WTC11 (cell line): ENCODE measurements at regions of chr11 and their contacts with region 1.

Region 1: GRCh38 chr11:73360336-73361013 is 15.7 kb upstream of the RELT start:
- DNase-seq: peak; percentile 81
- ATAC-seq: peak; percentile 23
- H3K4me3 Mint-ChIP-seq: no peak overlapping the region; the same call in 1 of the 2 replicates
- H3K27ac Mint-ChIP-seq: no peak overlapping the region; the same call in 1 of the 2 replicates
- H3K4me1 Mint-ChIP-seq: peaks cover 8% of the 10 kb centered on the region
- H3K27me3 Mint-ChIP-seq: peaks cover 7% of the 10 kb centered on the region
- CTCF ChIP-seq: no peak

Region 2: DNA sequence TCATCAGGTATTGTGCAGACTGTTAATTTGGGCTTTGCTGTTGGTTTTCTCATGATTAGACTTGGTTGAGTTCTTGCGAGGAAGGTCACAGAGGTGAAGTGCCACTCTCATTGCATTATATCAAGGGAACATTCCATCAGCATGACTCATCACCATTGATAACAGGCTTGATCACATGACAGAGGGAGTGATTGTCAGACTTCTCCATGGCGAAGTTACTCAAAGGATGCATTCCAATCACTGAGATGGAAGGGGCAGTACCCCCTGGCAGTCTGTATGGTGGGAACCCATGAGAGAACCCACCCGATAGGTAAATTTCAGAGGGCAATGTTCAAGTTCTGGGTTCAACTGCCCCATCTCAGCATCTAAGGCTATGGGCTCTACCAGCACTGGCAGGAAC is 161.8 kb before region 1 on chr11:
- CTCF ChIA-PET with region 1: no interaction called
- POLR2A ChIA-PET with region 1: no interaction called
- DNase-seq: peak; percentile 4
- ATAC-seq: no peak
- H3K4me3 Mint-ChIP-seq: no peak overlapping the region
- H3K27ac Mint-ChIP-seq: no peak overlapping the region
- H3K4me1 Mint-ChIP-seq: peaks cover 27% of the 10 kb centered on the region
- H3K27me3 Mint-ChIP-seq: no peaks in the 10 kb centered on the region; the same call in 1 of the 2 replicates
- CTCF ChIP-seq: no peak

Region 3: DNA sequence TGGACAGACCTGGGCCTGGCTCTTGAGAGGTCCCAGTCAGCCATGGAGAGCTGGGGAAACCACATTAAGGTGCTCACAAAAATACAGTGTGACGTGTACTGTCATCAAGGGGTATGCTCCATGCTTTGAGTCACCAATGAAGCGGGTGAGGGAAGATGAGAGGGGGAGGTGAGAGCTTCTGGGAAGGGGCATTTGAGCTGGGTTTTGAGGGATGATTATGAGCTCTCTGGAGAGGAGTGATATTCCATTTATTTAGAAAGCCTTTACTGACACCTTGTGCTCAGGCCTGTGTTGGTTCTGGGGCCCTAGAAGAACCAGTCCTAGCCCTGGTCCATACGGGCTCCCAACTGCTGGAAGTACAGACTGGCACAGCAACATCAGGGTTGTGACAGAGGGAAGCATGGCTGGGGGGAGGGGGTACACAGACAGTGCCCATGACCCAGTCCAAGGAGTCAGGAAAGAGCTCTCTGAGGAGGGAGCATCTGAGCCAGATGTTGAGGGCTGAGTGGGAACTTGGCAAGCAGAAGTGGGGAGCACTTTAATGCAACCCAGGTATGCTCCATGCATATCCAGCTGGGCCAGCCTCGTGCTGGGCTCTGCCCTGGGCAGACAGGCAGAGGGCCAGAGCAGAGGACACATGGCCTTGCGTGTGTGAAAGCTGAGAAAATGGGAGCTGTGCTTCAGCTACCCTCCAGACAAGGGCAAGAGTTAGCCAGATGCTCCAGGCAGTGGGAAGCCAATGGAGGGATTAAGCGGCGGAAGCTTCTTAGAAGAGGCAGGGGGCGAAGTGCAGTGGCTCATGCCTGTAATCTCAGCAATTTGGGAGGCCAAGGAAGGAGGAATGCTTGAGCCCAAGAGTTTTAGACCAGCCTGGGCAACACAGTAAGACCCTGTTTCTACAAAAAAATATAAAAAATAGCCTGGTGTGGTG is 62.5 kb before region 1 on chr11:
- CTCF ChIA-PET with region 1: interaction called, 21 read pairs
- POLR2A ChIA-PET with region 1: no interaction called
- DNase-seq: no peak
- ATAC-seq: no peak
- H3K4me3 Mint-ChIP-seq: no peak overlapping the region
- H3K27ac Mint-ChIP-seq: no peak overlapping the region
- H3K4me1 Mint-ChIP-seq: peaks cover 12% of the 10 kb centered on the region
- H3K27me3 Mint-ChIP-seq: peaks cover 6% of the 10 kb centered on the region
- CTCF ChIP-seq: no peak

Region 4: DNA sequence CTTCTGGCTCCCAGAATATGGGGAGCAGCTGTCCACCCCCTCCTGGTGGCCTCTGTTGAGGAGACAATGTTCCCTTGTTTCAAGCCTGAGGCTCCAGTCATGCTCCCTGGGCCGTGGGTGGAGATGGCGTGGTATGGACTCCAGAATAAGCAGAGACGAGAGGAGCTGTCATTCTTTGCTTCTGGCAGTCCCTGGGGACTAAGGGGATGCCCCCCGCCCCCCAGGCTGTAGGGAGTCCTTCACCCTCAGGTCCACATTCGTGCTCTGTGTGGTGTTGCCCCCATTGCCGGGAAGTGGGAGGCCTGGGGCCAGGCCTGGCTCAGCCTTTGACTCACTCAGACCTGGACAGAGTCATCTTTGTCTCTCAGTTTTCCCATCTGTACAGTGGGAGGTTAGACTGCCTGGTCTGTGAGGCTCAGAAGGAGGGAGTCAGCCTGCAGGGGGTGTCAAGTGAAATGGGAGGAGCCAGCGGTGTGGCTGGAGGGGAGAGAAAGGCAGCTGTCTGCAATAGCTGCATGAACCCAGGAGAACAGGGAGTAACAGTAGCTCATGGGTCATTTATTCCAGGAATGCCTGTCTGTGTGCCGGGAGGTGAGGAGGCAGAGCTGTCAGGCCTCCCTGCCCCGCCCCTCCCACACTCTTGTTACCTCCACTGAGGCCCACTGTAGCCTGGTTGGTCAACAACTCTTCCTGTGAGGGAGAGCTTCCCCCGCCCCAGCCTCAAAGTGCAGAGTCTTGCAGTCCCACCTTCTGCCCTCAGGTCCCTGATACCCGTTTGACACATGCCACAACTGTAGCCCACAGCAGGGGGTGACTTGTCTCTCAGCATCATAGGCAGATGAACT is 46.1 kb before region 1 on chr11:
- CTCF ChIA-PET with region 1: interaction called, 124 read pairs
- POLR2A ChIA-PET with region 1: interaction called, 4 read pairs
- DNase-seq: peak; percentile 28
- ATAC-seq: peak; percentile 46
- H3K4me3 Mint-ChIP-seq: no peak overlapping the region
- H3K27ac Mint-ChIP-seq: no peak overlapping the region
- H3K4me1 Mint-ChIP-seq: peaks cover 27% of the 10 kb centered on the region
- H3K27me3 Mint-ChIP-seq: peaks cover 20% of the 10 kb centered on the region
- CTCF ChIP-seq: no peak

Region 5: DNA sequence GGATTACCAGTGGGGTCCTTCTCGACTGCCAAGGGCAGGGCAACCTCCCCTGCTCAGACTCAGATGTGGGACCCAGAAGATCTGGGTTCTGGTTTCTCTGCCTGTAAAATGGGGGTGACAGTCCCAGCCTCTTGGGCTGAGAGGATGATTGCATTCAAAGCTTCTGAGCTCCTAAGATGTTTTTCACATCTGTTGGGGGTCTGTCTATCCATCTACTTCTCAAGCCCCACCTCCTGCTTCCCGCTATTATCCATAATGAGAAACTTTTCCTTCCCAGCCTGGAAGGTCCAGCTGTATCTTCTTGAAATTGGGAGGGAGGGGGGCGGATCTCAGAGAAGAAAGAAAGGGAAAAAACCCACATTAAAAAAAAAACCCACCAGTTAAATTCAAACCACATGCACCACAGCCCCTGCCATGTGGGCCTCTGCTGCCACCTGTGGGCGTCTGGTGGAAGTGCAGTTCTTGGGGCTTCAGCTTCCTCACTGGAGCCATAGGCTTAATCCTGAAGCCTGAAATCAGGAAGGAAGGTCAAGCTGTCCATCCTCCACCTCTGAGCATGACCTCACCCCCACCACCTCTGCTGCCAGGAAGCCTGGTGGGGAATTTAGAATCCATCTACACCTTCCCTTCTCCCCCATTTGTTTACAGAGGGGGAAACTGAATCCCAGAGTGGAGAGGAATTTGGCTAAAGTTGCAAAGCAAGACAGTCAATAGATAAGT is 25.1 kb before region 1 on chr11:
- CTCF ChIA-PET with region 1: interaction called, 64 read pairs
- POLR2A ChIA-PET with region 1: interaction called, 5 read pairs
- DNase-seq: peak; percentile 94
- ATAC-seq: peak; percentile 38
- H3K4me3 Mint-ChIP-seq: no peak overlapping the region
- H3K27ac Mint-ChIP-seq: no peak overlapping the region
- H3K4me1 Mint-ChIP-seq: peaks cover 50% of the 10 kb centered on the region
- H3K27me3 Mint-ChIP-seq: peaks cover 64% of the 10 kb centered on the region
- CTCF ChIP-seq: peak; percentile 95

Region 6: GRCh38 chr11:73376160-73376802 is 15.8 kb after region 1 on chr11 and contains the start of gene RELT:
- CTCF ChIA-PET with region 1: interaction called, 30 read pairs
- POLR2A ChIA-PET with region 1: no interaction called
- DNase-seq: peak; percentile 93
- ATAC-seq: peak; percentile 95
- H3K4me3 Mint-ChIP-seq: peak within 1 kb of the TSS; percentile 70
- H3K27ac Mint-ChIP-seq: no peak within 1 kb of the TSS
- H3K4me1 Mint-ChIP-seq: peaks cover 12% of the 10 kb centered on the region
- H3K27me3 Mint-ChIP-seq: peaks cover 16% of the 10 kb centered on the region
- CTCF ChIP-seq: peak; percentile 71
- total RNA-seq, gene RELT: 5.7 to 6.7 TPM (median 5.9 TPM) in 3 replicates

Region 7: DNA sequence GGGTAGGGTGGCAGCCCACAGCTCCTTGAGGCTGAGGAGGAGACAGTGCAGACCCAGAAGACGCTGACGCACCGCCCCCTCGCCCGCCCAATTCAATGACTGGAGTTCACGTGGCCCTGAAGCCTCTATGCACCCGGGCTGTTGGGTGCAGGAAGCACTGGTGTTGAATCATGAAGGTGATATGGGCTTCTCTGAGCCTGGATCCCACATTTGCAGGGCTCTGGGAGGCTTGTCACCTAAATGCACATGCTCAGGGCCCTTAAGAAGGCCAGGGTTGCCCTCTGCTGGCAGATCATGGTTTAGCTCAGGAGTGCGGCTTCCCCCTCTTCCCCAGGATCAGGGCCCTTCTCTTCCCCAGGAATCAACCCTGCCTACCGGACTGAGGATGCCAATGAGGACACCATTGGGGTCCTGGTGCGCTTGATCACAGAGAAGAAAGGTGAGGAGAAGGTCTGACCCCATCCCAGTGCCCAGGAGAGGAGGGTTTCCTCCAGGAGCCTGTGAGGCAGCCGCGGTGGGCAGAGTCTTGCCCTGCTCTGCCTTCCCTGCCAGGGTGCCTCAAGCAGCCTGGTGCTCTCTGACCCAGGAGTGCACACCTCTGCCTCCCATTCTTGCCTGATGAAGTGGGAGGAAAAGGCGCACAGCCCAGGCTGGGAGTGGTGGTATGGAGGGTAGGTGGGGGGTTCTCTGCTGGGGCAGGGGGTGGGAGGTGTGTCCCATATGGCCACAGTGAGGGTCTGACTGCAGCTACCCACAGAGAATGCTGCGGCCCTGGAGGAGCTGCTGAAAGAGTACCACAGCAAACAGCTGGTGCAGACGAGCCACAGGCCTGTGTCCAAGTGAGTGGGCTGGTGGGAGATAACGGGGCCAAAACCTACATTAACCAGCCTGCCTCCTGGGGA is 33.3 kb after region 1 on chr11:
- CTCF ChIA-PET with region 1: interaction called, 36 read pairs
- POLR2A ChIA-PET with region 1: no interaction called
- DNase-seq: peak; percentile 87
- ATAC-seq: peak; percentile 84
- H3K4me3 Mint-ChIP-seq: no peak overlapping the region
- H3K27ac Mint-ChIP-seq: no peak overlapping the region
- H3K4me1 Mint-ChIP-seq: no peaks in the 10 kb centered on the region
- H3K27me3 Mint-ChIP-seq: no peaks in the 10 kb centered on the region
- CTCF ChIP-seq: peak; percentile 68

Region 8: GRCh38 chr11:73414977-73415651 is 54.6 kb after region 1 on chr11:
- CTCF ChIA-PET with region 1: no interaction called
- POLR2A ChIA-PET with region 1: no interaction called
- DNase-seq: no peak
- ATAC-seq: no peak
- H3K4me3 Mint-ChIP-seq: no peak overlapping the region
- H3K27ac Mint-ChIP-seq: no peak overlapping the region
- H3K4me1 Mint-ChIP-seq: no peaks in the 10 kb centered on the region
- H3K27me3 Mint-ChIP-seq: no peaks in the 10 kb centered on the region
- CTCF ChIP-seq: no peak

Region 9: DNA sequence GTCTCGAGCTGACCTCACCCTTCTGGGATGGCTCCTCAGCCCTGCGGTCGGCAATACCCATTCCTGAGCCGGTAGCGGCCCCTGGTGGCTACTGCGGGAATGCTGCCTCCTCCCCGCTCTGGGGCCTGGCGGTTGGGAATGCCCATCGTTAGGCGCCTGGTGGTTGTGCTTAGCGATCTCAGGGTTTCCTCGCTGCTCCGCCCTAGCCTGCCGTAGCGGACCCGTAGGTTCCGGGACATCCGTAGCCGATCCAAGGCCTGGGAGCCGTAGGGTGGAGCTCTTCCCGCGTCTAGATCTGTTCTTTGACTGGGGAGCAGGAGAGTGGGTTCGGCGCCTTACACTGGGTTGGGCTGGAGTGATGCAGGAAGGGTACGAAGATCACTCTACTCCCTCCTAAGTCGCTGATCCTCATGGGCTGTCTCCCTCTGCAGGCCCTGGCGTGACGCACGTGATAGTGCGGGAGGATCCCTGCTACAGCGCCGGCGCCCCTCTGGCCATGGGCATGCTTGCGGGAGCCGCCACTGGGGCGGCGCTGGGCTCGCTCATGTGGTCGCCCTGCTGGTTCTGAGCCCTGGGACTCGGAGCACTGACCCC is 300.7 kb after region 1 on chr11:
- CTCF ChIA-PET with region 1: interaction called, 12 read pairs
- POLR2A ChIA-PET with region 1: no interaction called
- DNase-seq: peak; percentile 99
- ATAC-seq: peak; percentile 88
- H3K4me3 Mint-ChIP-seq: peak overlapping the region; percentile 72
- H3K27ac Mint-ChIP-seq: peak overlapping the region; percentile 33; the same call in 1 of the 2 replicates
- H3K4me1 Mint-ChIP-seq: peaks cover 13% of the 10 kb centered on the region
- H3K27me3 Mint-ChIP-seq: peaks cover 72% of the 10 kb centered on the region
- CTCF ChIP-seq: peak; percentile 91